HepG2 (cell line): ENCODE measurements at regions of chr7 and their contacts with region 1.

Region 1: GRCh38 chr7:16564909-16565426 is 38.3 kb downstream of the LRRC72 start:
- DNase-seq: peak; percentile 38
- ATAC-seq: peak; percentile 81
- H3K4me3 ChIP-seq: no peak overlapping the region
- H3K27ac ChIP-seq: no peak overlapping the region
- H3K4me1 ChIP-seq: no peaks in the 10 kb centered on the region
- H3K27me3 ChIP-seq: no peaks in the 10 kb centered on the region
- CTCF ChIP-seq: peak; percentile 77
- EP300 ChIP-seq: no peak
- POLR2A ChIP-seq: no peak
- RAD21 ChIP-seq: peak; percentile 73

Region 2: DNA sequence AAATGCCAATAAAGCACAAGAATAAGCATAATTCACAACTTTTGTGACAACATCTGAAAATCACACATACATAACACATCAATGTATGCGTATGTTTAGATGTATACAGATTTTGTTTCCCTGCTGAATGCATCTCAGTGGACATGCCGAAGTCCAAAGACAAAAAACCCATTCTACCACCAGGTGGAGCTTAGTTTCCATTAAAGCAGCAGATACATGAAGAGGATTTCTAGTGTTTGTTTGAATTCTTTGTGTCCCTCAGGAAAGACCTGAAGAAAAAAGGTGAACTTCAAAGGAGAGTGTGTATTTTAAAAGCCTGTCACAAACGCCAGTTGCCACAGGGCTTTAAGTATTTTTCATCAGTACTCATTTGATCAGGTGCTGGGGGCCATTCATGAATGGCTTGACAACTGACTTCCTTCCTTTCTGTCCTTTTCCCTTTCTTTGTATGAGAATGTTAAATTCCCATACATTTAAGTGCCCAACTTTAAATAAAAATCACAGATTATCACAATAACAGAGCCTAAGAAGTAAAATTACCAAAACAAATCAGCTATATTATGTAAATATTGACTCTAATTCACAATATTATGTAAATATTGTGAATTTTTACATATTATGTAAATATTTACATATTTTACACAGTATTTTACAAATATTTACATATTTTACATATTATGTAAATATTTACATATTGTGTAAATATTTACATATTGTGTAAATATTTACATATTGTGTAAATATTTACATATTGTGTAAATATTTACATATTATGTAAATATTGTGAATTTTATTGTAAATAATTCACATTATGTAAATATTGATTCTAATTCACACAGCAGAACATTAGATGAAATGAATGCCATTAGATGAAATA is 486.7 kb before region 1 on chr7:
- CTCF ChIA-PET with region 1: interaction called, 19 read pairs
- POLR2A ChIA-PET with region 1: no interaction called
- in situ Hi-C with region 1: loop called (anchors 5 kb)
- intact Hi-C with region 1: loop called (anchors 1 kb)
- DNase-seq: peak; percentile 65
- ATAC-seq: peak; percentile 87
- H3K4me3 ChIP-seq: no peak overlapping the region
- H3K27ac ChIP-seq: no peak overlapping the region
- H3K4me1 ChIP-seq: no peaks in the 10 kb centered on the region
- H3K27me3 ChIP-seq: no peaks in the 10 kb centered on the region
- CTCF ChIP-seq: peak; percentile 79
- EP300 ChIP-seq: no peak
- POLR2A ChIP-seq: no peak
- RAD21 ChIP-seq: peak; percentile 17; the same call in 1 of the 2 replicates

Region 3: GRCh38 chr7:16431646-16432424 is 133.1 kb before region 1 on chr7:
- CTCF ChIA-PET with region 1: interaction called, 39 read pairs
- POLR2A ChIA-PET with region 1: no interaction called
- in situ Hi-C with region 1: loop called (anchors 5 kb)
- intact Hi-C with region 1: loop called (anchors 1 kb)
- DNase-seq: peak; percentile 54
- ATAC-seq: peak; percentile 97
- H3K4me3 ChIP-seq: no peak overlapping the region
- H3K27ac ChIP-seq: no peak overlapping the region
- H3K4me1 ChIP-seq: no peaks in the 10 kb centered on the region
- H3K27me3 ChIP-seq: no peaks in the 10 kb centered on the region
- CTCF ChIP-seq: peak; percentile 66
- EP300 ChIP-seq: no peak
- POLR2A ChIP-seq: no peak
- RAD21 ChIP-seq: no peak

Region 4: DNA sequence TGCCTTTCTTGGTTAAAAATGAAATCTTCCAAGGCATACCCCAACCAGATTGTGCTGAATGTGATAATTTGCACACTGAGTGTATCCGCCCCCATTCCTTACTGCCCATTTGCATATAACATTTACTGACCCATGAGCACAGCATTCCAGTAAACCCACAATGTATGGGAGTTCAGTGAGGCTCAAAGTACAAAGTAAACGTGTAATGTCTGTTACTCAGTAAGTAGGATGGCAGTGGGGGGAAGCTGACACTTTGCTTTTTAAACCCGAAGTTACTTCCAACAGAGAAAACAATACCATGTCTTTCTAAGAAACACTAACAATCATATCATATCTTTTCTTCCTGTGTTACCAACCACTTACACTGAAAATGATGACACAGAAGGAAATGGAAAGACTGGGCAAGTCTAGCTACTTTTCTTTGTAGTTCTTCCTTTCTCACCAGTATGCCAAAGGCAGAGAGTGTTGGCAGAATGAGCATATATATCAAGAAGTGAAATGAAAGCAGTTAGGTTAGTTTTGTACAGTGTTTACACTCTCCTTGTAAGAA is 72.4 kb before region 1 on chr7:
- CTCF ChIA-PET with region 1: no interaction called
- POLR2A ChIA-PET with region 1: no interaction called
- in situ Hi-C with region 1: no loop called
- intact Hi-C with region 1: no loop called
- DNase-seq: peak; percentile 90
- ATAC-seq: peak; percentile 99
- H3K4me3 ChIP-seq: peak overlapping the region in 2 of 3 experiments; percentile 9 to 11; a peak in 1 of 6 replicates
- H3K27ac ChIP-seq: peak overlapping the region; percentile 66
- H3K4me1 ChIP-seq: peaks cover 43% of the 10 kb centered on the region
- H3K27me3 ChIP-seq: no peaks in the 10 kb centered on the region
- CTCF ChIP-seq: no peak
- EP300 ChIP-seq: 0 out of 4 replicates have a peak, but pooled peaks of 1 of the 2 experiments have one; percentile 44
- POLR2A ChIP-seq: no peak
- RAD21 ChIP-seq: no peak

Region 5: DNA sequence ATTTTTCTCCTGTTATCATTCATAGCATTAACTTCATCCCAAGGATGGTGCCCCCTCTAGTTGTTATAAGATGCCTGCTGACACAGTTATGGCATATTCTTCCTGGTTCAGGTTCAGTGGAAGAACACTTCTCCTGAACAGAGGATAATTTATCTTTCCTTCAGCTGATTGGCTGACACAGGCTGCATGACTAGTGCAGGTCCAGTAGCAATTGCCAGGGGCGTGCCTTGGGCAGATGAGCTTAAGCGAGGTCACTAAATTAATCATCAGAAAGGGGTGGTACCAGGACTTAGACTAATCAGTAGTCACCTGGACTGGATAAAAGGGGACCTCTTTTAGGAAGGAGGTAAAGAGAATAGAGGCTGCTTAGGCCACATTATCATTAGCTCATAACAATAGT is 123.3 kb after region 1 on chr7:
- CTCF ChIA-PET with region 1: no interaction called
- POLR2A ChIA-PET with region 1: no interaction called
- in situ Hi-C with region 1: no loop called
- intact Hi-C with region 1: no loop called
- DNase-seq: no peak
- ATAC-seq: no peak
- H3K4me3 ChIP-seq: no peak overlapping the region
- H3K27ac ChIP-seq: no peak overlapping the region
- H3K4me1 ChIP-seq: no peaks in the 10 kb centered on the region
- H3K27me3 ChIP-seq: no peaks in the 10 kb centered on the region
- CTCF ChIP-seq: no peak
- EP300 ChIP-seq: no peak
- POLR2A ChIP-seq: no peak
- RAD21 ChIP-seq: no peak